ENCODE measurements at regions of chr3 and their contacts with region 1.

Region 1: GRCh38 chr3:126394575-126395228 is at the start of gene CFAP100:
- DNase-seq: peak in 3 of 5 donors; percentile 34 to 56 (median 48)
- ATAC-seq: peak; percentile 16 to 78 (median 62)
- H3K4me3 ChIP-seq: peak within 1 kb of the TSS in 11 of 12 donors; percentile 13 to 50 (median 30)
- H3K27ac ChIP-seq: no peak within 1 kb of the TSS
- H3K4me1 ChIP-seq: peaks cover 0 to 9% (median 2%) of the 10 kb centered on the region in 12 donors
- H3K27me3 ChIP-seq: peaks cover 0 to 26% (median 0%) of the 10 kb centered on the region in 9 donors
- CTCF ChIP-seq: no peak
- POLR2A ChIP-seq: no peak
- total RNA-seq, gene CFAP100: not detected

Region 2: DNA sequence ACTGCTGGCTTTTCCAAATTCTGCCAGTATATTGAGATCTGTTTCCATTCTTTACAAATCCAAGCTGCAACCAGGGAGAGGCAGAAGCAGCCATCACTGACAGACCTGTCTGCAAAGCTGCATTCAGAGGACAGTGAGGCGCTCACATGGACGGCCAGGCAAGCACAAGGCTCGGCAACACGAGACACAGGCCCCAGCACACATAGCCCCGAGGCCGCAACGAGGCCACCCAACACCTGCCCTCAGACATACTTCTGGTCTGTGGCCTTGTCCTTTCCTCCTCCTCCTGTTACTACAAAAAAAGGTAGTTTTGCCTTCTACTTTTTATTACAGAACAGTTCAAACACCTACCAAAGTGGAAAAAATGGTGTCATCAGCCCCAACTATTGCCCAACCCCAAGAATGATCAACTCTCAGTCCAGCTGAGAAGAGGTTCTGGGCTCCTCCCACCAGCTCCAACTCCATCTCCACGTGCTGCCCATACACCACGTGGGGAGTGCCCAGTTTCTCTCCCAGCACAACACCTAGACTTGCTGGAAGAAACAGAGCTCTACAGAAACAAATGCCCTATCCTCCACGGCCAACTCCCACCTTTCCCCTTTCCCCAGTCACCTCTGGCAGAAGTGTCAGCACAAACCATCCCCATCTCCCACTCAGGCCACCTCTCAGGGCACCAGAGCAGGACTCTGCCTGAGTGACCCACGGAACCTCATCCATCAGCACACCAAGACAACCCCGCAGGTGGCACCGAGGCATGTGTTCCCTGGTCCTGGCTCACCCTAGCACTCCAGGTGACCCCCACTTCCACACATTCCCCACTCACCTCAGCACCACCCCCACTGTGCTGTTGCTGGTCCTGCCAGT is 73.6 kb after region 1 on chr3:
- intact Hi-C with region 1: loop called in 2 of 10 experiments (anchors 5 to 10 kb)
- DNase-seq: peak in 1 of 5 donors; percentile 15
- ATAC-seq: peak in 1 of 4 donors; percentile 19
- H3K4me3 ChIP-seq: no peak overlapping the region
- H3K27ac ChIP-seq: peak overlapping the region in 2 of 12 donors; percentile 35 to 54
- H3K4me1 ChIP-seq: peaks cover 0 to 83% (median 33%) of the 10 kb centered on the region in 12 donors
- H3K27me3 ChIP-seq: no peaks in the 10 kb centered on the region
- CTCF ChIP-seq: no peak
- POLR2A ChIP-seq: no peak

Region 3: GRCh38 chr3:126475413-126476114 is 80.9 kb after region 1 on chr3 and contains the start of gene ZXDC:
- intact Hi-C with region 1: loop called in 1 of 10 experiments (anchors 5 kb)
- DNase-seq: peak; percentile 95 to 98 (median 96)
- ATAC-seq: peak; percentile 83 to 89 (median 87)
- H3K4me3 ChIP-seq: peak within 1 kb of the TSS; percentile 63 to 90 (median 80)
- H3K27ac ChIP-seq: peak within 1 kb of the TSS; percentile 85 to 97 (median 92)
- H3K4me1 ChIP-seq: peaks cover 0 to 54% (median 42%) of the 10 kb centered on the region in 12 donors
- H3K27me3 ChIP-seq: no peaks in the 10 kb centered on the region
- CTCF ChIP-seq: peak in 9 of 12 donors; percentile 18 to 70 (median 51)
- POLR2A ChIP-seq: peak in 1 of 2 donors; percentile 50
- total RNA-seq, gene ZXDC: 15.4 to 40.3 (median 20.2) TPM

Measured in heart left ventricle (tissue), 16 donors.